ENCODE measurements at regions of chr2 and their contacts with region 1.

Region 1: GRCh38 chr2:175414882-175415487 is 233.5 kb upstream of the ATP5MC3 start:
- DNase-seq: peak; percentile 50 to 65
- H3K4me3 ChIP-seq: no peak overlapping the region
- H3K27ac ChIP-seq: no peak overlapping the region
- H3K4me1 ChIP-seq: no peaks in the 10 kb centered on the region
- H3K27me3 ChIP-seq: no peaks in the 10 kb centered on the region
- CTCF ChIP-seq: peak; percentile 43 to 73 (median 52)
- EP300 ChIP-seq: no peak
- POLR2A ChIP-seq: no peak
- RAD21 ChIP-seq: peak; percentile 71 to 76

Region 2: GRCh38 chr2:175435012-175435411 is 20.0 kb after region 1 on chr2:
- CTCF ChIA-PET with region 1: interaction called, 12 read pairs
- POLR2A ChIA-PET with region 1: no interaction called
- DNase-seq: no peak
- H3K4me3 ChIP-seq: no peak overlapping the region
- H3K27ac ChIP-seq: no peak overlapping the region
- H3K4me1 ChIP-seq: no peaks in the 10 kb centered on the region
- H3K27me3 ChIP-seq: no peaks in the 10 kb centered on the region
- CTCF ChIP-seq: no peak
- EP300 ChIP-seq: no peak
- POLR2A ChIP-seq: no peak
- RAD21 ChIP-seq: no peak